Posterior vena cava (tissue), 2 donors: ENCODE measurements at regions of chr3 and their contacts with region 1.

Region 1: GRCh38 chr3:62574266-62574898 is 201.0 kb upstream of the FEZF2 start:
- DNase-seq: no peak

Region 2: GRCh38 chr3:60636846-60637245 is 1937.5 kb before region 1 on chr3:
- intact Hi-C with region 1: no loop called
- DNase-seq: no peak

Region 3: GRCh38 chr3:64163755-64164148 is 1589.4 kb after region 1 on chr3:
- intact Hi-C with region 1: loop called in 1 of 2 experiments (anchors 5 kb)
- DNase-seq: no peak